ENCODE measurements at regions of chr10 and their contacts with region 1.

Region 1: DNA sequence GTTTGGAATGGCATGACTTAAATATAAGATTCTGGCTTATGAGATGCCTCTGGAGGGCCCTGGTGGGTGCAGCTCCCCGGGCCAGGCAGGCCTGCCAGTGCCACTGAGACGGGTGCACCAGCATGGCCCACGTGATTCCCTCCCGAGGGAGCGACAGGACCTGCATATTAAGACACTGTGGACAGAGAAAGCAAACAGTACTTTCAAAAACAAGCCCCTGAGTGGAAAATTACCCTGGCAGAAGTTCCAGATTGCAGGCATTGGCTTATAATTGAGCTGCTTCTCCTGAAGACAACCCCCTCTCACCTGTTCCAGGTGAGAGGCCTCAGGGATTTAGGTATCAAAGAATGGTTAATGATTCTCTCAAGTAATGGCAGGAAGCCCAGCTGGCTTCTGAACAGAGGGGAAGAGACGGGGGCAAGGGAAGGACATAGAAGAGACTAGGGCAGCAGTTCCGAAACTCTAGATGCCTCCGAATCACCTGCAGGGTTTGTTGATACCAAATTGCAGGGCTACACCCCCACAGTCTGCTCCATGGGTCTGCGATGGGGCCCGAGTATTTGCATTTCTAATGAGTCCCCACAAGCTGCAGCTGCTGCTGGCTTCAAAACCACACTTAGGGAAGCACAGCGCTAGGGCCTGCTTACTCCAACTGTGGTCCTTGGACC is 66.0 kb upstream of the DOCK1 start:
- DNase-seq: peak; percentile 58 to 95 (median 91)
- ATAC-seq: peak; percentile 94
- H3K4me3 ChIP-seq: no peak overlapping the region
- H3K27ac ChIP-seq: peak overlapping the region; percentile 45 to 75 (median 58)
- H3K4me1 ChIP-seq: peaks cover 38% of the 10 kb centered on the region
- H3K27me3 ChIP-seq: no peaks in the 10 kb centered on the region
- CTCF ChIP-seq: peak in 1 of 7 experiments; percentile 5
- POLR2A ChIP-seq: peak in 1 of 3 donors; percentile 8

Region 2: GRCh38 chr10:127012769-127013152 is 173.5 kb after region 1 on chr10:
- intact Hi-C with region 1: loop called (anchors 10 kb)
- DNase-seq: peak; percentile 93 to 98 (median 95)
- ATAC-seq: peak; percentile 97
- H3K4me3 ChIP-seq: no peak overlapping the region
- H3K27ac ChIP-seq: peak overlapping the region; percentile 69 to 75 (median 70)
- H3K4me1 ChIP-seq: peaks cover 21% of the 10 kb centered on the region
- H3K27me3 ChIP-seq: no peaks in the 10 kb centered on the region
- CTCF ChIP-seq: no peak
- POLR2A ChIP-seq: peak in 2 of 3 donors; percentile 38 to 45

Region 3: DNA sequence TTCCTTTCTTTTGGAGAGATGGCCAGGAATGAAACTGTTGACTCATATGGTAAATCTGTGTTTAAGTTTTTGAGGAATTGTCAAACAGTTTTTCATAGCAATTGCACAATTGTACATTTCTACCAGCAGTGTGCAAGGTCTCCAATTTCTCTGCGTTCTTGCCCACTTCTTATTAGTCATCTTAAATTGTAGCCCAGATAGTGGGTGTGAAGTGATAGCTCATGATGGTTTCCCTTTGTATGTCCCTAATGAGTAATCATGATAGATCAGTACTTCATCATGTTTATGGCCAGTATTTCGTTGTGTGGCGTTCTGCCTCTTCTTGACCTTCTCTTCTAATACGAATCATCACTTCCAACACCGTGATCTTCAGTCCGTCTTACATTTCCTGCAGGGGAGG is 202.3 kb after region 1 on chr10:
- intact Hi-C with region 1: no loop called
- DNase-seq: no peak
- ATAC-seq: no peak
- H3K4me3 ChIP-seq: no peak overlapping the region
- H3K27ac ChIP-seq: no peak overlapping the region
- H3K4me1 ChIP-seq: peaks cover 11% of the 10 kb centered on the region
- H3K27me3 ChIP-seq: no peaks in the 10 kb centered on the region
- CTCF ChIP-seq: no peak
- POLR2A ChIP-seq: no peak

Measured in body of pancreas (tissue), 4 donors.